ENCODE measurements at regions of chr3 and their contacts with region 1.

Region 1: GRCh38 chr3:103684904-103685303 is 1250.1 kb downstream of the ZPLD1 start:
- DNase-seq: no peak
- ATAC-seq: no peak
- H3K4me3 Mint-ChIP-seq: no peak overlapping the region
- H3K27ac Mint-ChIP-seq: no peak overlapping the region
- H3K4me1 Mint-ChIP-seq: no peaks in the 10 kb centered on the region
- H3K27me3 Mint-ChIP-seq: no peaks in the 10 kb centered on the region
- CTCF ChIP-seq: no peak

Region 2: GRCh38 chr3:103991461-103992115 is 306.7 kb after region 1 on chr3:
- CTCF ChIA-PET with region 1: no interaction called
- POLR2A ChIA-PET with region 1: no interaction called
- intact Hi-C with region 1: loop called (anchors 10 kb)
- DNase-seq: no peak
- ATAC-seq: no peak
- H3K4me3 Mint-ChIP-seq: no peak overlapping the region
- H3K27ac Mint-ChIP-seq: no peak overlapping the region
- H3K4me1 Mint-ChIP-seq: no peaks in the 10 kb centered on the region
- H3K27me3 Mint-ChIP-seq: no peaks in the 10 kb centered on the region
- CTCF ChIP-seq: no peak

Measured in activated B cell treated with CpG ODN at 0.5 μM for 24 hours (primary cell).